ENCODE measurements at regions of chr10 and their contacts with region 1.

Region 1: DNA sequence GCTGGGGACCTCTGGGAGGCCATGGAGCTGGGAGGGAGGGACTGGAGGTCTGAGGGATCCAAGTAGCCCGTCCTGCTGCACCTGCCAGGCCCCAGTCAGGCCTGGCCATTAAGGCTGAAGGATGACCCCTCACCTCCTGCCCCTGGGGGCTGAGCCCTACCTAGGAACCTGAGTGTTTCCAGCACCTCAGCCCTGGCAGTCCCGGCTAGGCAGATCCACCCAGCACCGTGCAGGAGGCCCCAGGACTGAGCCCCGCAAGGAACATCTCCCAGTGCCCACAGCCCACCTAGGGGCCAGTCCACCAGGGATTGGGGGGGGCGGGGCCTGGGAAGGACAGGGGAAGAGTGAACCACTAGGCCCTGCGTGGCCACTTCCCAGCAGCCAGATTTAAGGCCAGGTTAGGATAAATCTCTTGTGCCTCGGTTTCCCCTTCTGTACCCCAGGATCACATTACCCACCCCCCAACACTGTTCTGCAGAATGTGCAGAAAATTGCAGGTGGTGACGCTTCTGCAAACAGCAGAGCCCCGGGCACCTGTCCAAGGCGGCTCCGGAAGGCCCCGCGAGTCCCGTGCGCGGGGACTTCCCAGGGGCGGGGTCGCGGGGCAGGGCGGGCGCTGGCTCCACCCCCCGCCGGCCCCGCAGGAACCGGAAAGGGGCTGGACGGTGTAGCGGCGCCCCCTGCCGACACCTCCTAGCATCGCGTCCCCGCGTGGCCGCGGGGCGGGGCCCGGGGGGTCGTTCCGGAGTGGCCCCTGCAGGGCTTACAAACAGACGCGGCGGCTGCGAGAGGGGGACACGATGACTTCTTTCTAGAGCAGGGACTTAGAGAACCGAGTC is 55.9 kb downstream of the PWWP2B start:
- DNase-seq: no peak
- H3K4me3 ChIP-seq: no peak overlapping the region; the same call in 1 of the 2 replicates
- CTCF ChIP-seq: peak; percentile 93

Region 2: GRCh38 chr10:132223156-132223590 is 229.7 kb before region 1 on chr10:
- CTCF ChIA-PET with region 1: interaction called, 56 read pairs
- POLR2A ChIA-PET with region 1: no interaction called
- DNase-seq: peak; percentile 7
- H3K4me3 ChIP-seq: no peak overlapping the region
- CTCF ChIP-seq: peak; percentile 99

Region 3: DNA sequence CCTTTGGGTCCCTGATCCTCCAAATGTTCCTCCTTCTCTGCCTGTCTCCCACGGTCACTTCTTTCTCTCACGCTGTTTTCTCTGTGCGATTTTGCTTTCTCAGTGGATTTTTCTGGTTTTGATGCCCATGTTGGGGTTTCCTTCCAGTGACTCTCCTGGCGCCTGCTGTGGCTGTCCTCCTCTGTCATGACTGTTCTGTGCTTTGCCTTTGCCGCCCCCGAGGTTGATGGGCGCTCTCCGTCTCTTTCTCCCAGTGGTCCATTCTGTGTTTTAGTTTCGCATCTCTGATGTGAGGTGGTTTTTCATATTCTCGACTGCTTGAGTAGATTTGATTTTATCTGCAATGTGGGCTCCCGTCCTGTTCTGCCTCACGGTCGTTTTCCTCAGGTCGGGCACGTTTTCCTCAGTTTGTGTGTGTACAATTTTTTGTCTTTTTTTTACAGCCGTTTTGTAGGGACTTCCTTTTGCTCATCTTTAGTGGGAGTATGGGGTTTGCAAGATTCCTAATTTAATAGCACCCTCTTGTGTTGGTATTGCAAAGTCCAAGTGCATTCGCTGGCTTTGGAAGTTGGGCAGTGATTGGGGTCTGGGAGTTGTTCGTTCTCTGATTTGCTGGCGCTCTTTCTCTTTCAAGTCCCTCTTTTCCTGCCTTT is 184.8 kb after region 1 on chr10:
- CTCF ChIA-PET with region 1: interaction called, 33 read pairs
- POLR2A ChIA-PET with region 1: no interaction called
- DNase-seq: no peak
- H3K4me3 ChIP-seq: no peak overlapping the region
- CTCF ChIP-seq: peak; percentile 54

Measured in AG04449 (cell line).